Activated naive CD4-positive, alpha-beta T cell treated with anti-CD3 and anti-CD28 coated beads for 36 hours (primary cell): ENCODE measurements at regions of chr6 and their contacts with region 1.

Region 1: GRCh38 chr6:20092071-20092566 is 120.2 kb downstream of the MBOAT1 start:
- DNase-seq: peak; percentile 12
- H3K4me3 Mint-ChIP-seq: no peak overlapping the region
- H3K27ac Mint-ChIP-seq: no peak overlapping the region
- H3K4me1 Mint-ChIP-seq: no peaks in the 10 kb centered on the region
- H3K27me3 Mint-ChIP-seq: no peaks in the 10 kb centered on the region

Region 2: DNA sequence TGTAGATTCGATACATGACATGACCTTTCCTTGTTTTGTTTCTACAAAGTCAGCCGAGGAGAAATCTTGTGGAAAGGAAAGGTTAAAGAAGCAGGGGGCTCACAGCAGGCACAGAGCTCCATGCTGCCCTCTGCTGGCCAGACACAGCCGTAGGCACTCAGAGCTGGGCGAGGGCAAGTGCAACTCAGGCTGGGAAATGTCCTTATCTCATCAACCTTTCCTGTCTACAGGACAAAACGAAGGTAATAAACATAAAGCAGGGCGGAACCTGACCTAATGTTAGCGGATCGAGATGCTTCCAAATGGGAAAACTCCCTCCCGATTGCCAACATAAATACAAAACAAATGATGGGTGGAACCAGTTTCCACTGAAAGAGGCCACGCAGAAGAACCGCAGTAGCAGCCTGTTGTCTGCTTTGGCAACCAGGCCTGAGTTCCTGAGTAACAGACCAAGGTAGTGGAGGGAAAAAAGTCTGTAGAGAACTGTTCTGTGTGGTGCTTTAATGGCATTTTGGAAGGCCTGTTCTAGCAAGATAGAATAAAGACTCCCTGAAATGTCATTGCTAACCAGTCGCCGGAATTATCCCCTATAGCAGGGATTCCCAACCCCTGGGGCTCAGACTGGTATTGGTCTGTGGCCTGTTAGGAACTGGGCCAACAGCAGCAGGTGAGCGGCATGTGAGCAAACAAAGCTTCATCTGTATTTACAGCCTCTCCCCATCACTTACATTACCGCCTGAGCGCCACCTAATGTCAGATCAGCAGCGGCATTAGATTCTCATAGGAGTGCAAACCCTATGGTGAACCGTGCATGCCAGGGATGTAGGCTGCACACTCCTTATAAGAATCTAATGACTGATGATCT is 34.9 kb after region 1 on chr6:
- CTCF ChIA-PET with region 1: interaction called, 18 read pairs
- intact Hi-C with region 1: loop called (anchors 1 kb)
- DNase-seq: peak; percentile 73
- H3K4me3 Mint-ChIP-seq: no peak overlapping the region
- H3K27ac Mint-ChIP-seq: no peak overlapping the region
- H3K4me1 Mint-ChIP-seq: peaks cover 4% of the 10 kb centered on the region
- H3K27me3 Mint-ChIP-seq: no peaks in the 10 kb centered on the region

Region 3: DNA sequence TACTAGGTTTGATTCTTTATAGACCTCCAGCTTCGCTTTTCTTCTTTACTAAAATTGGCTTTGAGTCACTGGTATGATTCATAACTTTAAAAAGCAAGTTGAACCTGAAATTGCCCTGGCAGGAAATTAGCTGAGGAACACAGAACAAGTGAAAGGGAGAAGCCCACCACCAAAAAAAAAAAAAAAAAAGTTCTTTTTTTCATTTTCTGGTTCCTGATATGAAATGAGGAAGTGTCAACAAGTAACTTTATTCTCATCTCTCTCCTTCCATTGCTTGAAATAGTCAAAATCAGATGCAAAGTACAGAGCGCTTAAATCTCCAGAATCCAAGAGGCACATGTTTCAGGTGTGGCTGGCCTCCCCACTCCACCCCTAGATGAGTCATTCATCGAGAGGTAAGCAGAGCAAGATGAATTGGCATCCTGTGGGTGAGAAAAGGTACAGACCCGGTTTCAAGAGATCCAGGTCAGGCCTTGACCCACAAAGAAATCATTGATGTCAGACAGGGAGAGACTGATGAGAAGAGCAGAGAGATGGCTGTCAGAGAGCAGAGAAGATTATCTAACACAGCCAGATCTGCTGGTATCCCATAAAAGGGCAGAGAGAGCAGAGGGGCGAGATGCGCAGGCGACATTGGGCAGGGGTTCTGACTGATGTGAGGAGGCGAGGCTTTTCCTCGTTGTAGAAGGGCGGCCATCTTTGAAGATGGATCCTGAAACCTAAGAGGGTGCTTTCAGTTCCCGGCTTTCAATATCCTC is 174.9 kb after region 1 on chr6:
- CTCF ChIA-PET with region 1: interaction called, 6 read pairs
- intact Hi-C with region 1: loop called (anchors 1 kb)
- DNase-seq: peak; percentile 30
- H3K4me3 Mint-ChIP-seq: no peak overlapping the region
- H3K27ac Mint-ChIP-seq: no peak overlapping the region
- H3K4me1 Mint-ChIP-seq: peaks cover 12% of the 10 kb centered on the region
- H3K27me3 Mint-ChIP-seq: no peaks in the 10 kb centered on the region

Region 4: DNA sequence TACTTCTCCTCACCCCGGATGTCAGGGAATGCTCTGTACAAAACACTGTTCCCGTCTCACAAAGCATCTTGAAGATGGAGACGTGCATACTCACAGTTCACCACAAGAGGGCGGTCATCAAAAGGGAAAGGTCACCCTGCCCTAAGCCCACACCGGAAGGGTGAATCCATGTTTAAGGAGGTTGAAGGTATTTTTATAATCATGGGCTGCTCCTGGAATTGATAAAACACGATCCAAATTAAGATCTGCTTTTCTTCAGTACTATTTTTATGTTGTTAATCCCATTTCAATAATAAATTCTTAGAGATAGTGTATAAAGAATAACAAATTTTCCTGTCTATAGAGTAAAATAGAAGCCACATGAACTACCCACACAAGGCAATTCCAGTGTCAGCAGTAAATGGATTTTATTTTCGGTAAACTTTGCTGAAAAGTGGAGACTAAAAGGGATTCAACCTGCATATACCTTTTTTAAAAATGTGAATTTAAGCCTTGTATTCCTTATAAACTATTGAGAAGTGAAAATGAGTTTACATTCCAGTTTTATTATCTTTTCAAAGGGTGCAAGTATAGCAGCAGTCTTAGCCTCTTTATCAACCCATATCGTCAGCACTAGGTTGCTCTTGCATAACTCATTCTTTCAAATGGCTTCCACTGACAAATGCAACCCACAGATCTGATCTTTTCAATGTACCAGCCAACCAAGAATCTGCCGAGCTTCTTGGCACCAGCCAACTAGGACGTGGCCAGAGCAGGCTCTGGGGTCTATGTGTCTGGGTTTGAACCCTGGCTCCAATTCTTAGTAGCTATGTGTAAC is 199.9 kb after region 1 on chr6:
- CTCF ChIA-PET with region 1: interaction called, 6 read pairs
- intact Hi-C with region 1: loop called (anchors 1 kb)
- DNase-seq: peak; percentile 90
- H3K4me3 Mint-ChIP-seq: no peak overlapping the region
- H3K27ac Mint-ChIP-seq: no peak overlapping the region
- H3K4me1 Mint-ChIP-seq: peaks cover 16% of the 10 kb centered on the region
- H3K27me3 Mint-ChIP-seq: no peaks in the 10 kb centered on the region

Region 5: GRCh38 chr6:21587179-21587924 is 1495.2 kb after region 1 on chr6:
- CTCF ChIA-PET with region 1: no interaction called
- intact Hi-C with region 1: loop called (anchors 1 kb)
- DNase-seq: peak; percentile 15
- H3K4me3 Mint-ChIP-seq: peak overlapping the region; percentile 81
- H3K27ac Mint-ChIP-seq: no peak overlapping the region
- H3K4me1 Mint-ChIP-seq: peaks cover 9% of the 10 kb centered on the region
- H3K27me3 Mint-ChIP-seq: peaks cover 51% of the 10 kb centered on the region